PC-9 (cell line): ENCODE measurements at regions of chr7 and their contacts with region 1.

Region 1: DNA sequence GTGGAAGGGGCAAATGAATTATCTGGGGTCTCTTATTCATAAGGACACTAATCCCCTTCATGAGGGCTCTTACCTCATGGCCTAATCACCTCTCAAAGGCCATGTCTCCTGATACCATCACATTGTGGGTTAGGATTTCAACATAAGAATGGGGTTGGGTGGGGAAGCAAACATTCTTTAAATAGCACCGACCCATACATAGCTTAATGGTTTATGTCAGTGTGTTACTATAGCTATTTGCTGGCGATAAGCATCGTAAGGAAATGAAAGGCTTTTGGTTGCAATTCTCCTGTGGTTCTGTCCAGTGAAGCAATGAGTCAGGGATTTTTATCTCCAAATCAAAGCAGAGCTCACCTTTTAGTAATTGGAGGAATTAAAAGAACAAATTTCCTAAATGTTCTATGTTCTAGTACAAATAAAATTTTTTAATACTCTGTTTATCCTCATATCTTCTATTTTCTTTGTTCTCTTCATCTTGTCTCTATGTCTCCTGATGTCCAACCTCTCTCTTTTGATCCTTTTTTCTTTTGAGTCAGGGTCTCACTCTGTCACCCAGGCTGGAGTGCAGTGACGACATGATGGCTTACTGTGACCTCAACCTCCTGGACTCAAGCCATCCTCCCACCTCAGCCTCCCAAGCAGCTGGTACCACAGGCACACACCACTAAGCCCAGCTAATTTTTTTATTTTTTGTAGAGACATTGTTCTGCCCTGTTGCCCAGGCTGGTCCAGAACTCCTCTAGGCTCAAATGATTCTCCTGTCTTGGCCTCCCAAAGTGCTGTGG is 57.0 kb upstream of the GLCCI1 start:
- DNase-seq: peak; percentile 80 to 99
- H3K4me3 ChIP-seq: no peak overlapping the region
- H3K27ac ChIP-seq: peak overlapping the region; percentile 90
- H3K4me1 ChIP-seq: peaks cover 51% of the 10 kb centered on the region
- H3K27me3 ChIP-seq: no peaks in the 10 kb centered on the region
- CTCF ChIP-seq: no peak

Region 2: GRCh38 chr7:7157177-7157886 is 754.2 kb before region 1 on chr7:
- CTCF ChIA-PET with region 1: no interaction called
- POLR2A ChIA-PET with region 1: no interaction called
- intact Hi-C with region 1: no loop called
- DNase-seq: peak in 1 of 2 experiments; percentile 16
- H3K4me3 ChIP-seq: no peak overlapping the region
- H3K27ac ChIP-seq: no peak overlapping the region
- H3K4me1 ChIP-seq: no peaks in the 10 kb centered on the region
- H3K27me3 ChIP-seq: no peaks in the 10 kb centered on the region
- CTCF ChIP-seq: no peak

Region 3: GRCh38 chr7:7640221-7641128 is 271.1 kb before region 1 on chr7 and contains the start of gene UMAD1:
- CTCF ChIA-PET with region 1: no interaction called
- POLR2A ChIA-PET with region 1: no interaction called
- intact Hi-C with region 1: loop called (anchors 1 kb)
- DNase-seq: peak; percentile 99
- H3K4me3 ChIP-seq: peak within 1 kb of the TSS; percentile 83
- H3K27ac ChIP-seq: peak within 1 kb of the TSS; percentile 58
- H3K4me1 ChIP-seq: peaks cover 27% of the 10 kb centered on the region
- H3K27me3 ChIP-seq: no peaks in the 10 kb centered on the region
- CTCF ChIP-seq: no peak
- total RNA-seq, gene UMAD1: 15.5 and 20.5 TPM in 2 replicates

Region 4: GRCh38 chr7:7795203-7796135 is 116.1 kb before region 1 on chr7:
- CTCF ChIA-PET with region 1: no interaction called
- POLR2A ChIA-PET with region 1: interaction called, 6 read pairs
- intact Hi-C with region 1: loop called (anchors 1 kb)
- DNase-seq: peak; percentile 74 to 98
- H3K4me3 ChIP-seq: no peak overlapping the region
- H3K27ac ChIP-seq: peak overlapping the region; percentile 81
- H3K4me1 ChIP-seq: peaks cover 44% of the 10 kb centered on the region
- H3K27me3 ChIP-seq: no peaks in the 10 kb centered on the region
- CTCF ChIP-seq: no peak

Region 5: GRCh38 chr7:7959979-7960670 is 48.6 kb after region 1 on chr7:
- CTCF ChIA-PET with region 1: no interaction called
- POLR2A ChIA-PET with region 1: no interaction called
- intact Hi-C with region 1: loop called (anchors 1 kb)
- DNase-seq: no peak
- H3K4me3 ChIP-seq: no peak overlapping the region
- H3K27ac ChIP-seq: no peak overlapping the region
- H3K4me1 ChIP-seq: peaks cover 37% of the 10 kb centered on the region
- H3K27me3 ChIP-seq: no peaks in the 10 kb centered on the region
- CTCF ChIP-seq: no peak